ENCODE measurements at regions of chr10 and their contacts with region 1.

Region 1: DNA sequence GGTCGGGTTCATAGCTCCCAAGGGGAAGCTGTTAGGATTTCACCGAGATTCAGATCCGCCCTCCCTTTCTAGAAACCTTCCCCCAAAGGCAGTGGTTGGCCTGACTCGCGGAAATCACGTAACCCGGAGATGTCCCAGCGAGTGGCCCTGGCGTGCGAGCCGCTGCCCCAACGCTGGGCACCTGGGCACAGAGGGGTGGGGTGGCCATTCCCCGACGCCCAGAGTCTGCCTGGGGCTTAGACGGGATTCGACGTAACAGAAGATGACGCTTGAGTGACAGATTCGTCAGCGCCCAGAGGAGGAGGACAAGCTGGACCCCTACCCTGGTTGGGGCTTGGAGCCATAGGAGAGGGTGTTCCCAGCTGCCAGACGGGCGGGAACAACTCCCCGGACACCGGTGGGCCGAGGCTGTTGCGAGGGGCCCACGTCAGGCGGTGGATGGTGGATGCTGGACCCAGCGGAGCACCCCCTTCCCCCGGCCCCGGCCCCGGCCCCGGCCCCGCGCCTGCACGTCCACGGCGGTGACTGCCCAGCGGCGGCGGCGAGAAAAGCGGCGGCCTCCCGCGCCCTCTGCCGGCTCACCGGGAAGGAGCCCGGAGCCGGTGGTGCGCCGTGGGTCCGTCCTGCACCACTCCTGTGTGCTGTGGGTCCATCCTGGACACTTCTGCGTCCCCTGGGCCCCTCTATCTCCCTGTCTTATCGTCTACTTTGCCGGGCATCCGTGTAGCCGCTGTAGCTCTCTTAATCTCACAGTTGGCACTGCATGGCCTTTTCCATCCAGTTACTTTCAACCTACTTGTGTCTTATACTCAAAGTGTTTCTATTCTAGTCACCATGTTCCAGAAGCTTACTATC is 35.4 kb upstream of the KNDC1 start:
- DNase-seq: peak in 38 of 42 donors; percentile 6 to 83 (median 54)

Region 2: GRCh38 chr10:132848291-132848701 is 276.3 kb before region 1 on chr10:
- intact Hi-C with region 1: loop called (anchors 10 kb)
- DNase-seq: peak in 8 of 42 donors; percentile 7 to 42 (median 21)

Region 3: GRCh38 chr10:132939957-132940790 is 184.4 kb before region 1 on chr10:
- intact Hi-C with region 1: loop called (anchors 5 kb)
- DNase-seq: peak in 40 of 42 donors; percentile 20 to 85 (median 65)